PC-9 (cell line): ENCODE measurements at regions of chr16 and their contacts with region 1.

Region 1: GRCh38 chr16:31696968-31697743 is 169.5 kb downstream of the AHSP start:
- DNase-seq: no peak
- H3K4me3 ChIP-seq: no peak overlapping the region
- H3K27ac ChIP-seq: no peak overlapping the region
- H3K4me1 ChIP-seq: peaks cover 10% of the 10 kb centered on the region
- H3K27me3 ChIP-seq: no peaks in the 10 kb centered on the region
- CTCF ChIP-seq: peak; percentile 78

Region 2: DNA sequence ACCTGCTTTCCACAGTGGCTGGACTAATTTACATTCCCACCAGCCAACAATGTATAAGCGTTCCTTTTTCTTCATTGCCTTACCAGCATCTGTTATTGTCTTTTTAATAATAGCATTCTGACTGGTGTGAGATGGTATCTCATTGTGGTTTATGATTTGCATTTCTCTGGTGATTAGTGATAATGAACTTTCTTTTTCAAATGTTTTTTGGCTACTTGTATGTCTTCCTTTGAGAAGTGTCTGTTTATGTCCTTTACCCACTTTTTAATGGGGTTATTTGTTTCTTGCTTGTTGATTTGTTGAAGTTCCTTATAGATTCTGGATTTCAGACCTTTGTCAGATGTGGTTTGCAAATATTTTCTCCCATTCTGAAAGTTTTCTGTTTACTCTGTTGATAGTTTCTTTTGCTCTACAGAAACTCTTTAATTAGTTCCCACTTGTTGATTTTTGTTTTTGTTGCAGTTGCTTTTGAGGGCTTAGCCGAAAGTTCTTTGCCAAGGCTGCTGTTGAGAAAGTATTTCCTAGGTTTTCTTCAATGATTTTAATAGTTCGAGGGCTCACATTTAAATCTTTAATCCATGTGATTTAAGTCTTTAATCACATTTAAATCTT is 410.6 kb before region 1 on chr16:
- CTCF ChIA-PET with region 1: no interaction called
- POLR2A ChIA-PET with region 1: no interaction called
- intact Hi-C with region 1: loop called (anchors 10 kb)
- DNase-seq: no peak
- H3K4me3 ChIP-seq: no peak overlapping the region
- H3K27ac ChIP-seq: no peak overlapping the region
- H3K4me1 ChIP-seq: no peaks in the 10 kb centered on the region
- H3K27me3 ChIP-seq: peaks cover 6% of the 10 kb centered on the region; the same call in 1 of the 2 replicates
- CTCF ChIP-seq: no peak